GM12878 (cell line): ENCODE measurements at regions of chr10 and their contacts with region 1.

Region 1: GRCh38 chr10:24724381-24725228 is 918 bp upstream of the ARHGAP21 start:
- DNase-seq: peak; percentile 90
- ATAC-seq: peak; percentile 87
- H3K4me3 ChIP-seq: peak overlapping the region; percentile 88
- H3K27ac ChIP-seq: peak overlapping the region; percentile 51
- H3K4me1 ChIP-seq: peaks cover 6% of the 10 kb centered on the region; the same call in 1 of the 2 replicates
- H3K27me3 ChIP-seq: no peaks in the 10 kb centered on the region
- CTCF ChIP-seq: no peak
- EP300 ChIP-seq: no peak
- POLR2A ChIP-seq: peak; percentile 89
- RAD21 ChIP-seq: peak; percentile 4; the same call in 1 of the 2 replicates

Region 2: DNA sequence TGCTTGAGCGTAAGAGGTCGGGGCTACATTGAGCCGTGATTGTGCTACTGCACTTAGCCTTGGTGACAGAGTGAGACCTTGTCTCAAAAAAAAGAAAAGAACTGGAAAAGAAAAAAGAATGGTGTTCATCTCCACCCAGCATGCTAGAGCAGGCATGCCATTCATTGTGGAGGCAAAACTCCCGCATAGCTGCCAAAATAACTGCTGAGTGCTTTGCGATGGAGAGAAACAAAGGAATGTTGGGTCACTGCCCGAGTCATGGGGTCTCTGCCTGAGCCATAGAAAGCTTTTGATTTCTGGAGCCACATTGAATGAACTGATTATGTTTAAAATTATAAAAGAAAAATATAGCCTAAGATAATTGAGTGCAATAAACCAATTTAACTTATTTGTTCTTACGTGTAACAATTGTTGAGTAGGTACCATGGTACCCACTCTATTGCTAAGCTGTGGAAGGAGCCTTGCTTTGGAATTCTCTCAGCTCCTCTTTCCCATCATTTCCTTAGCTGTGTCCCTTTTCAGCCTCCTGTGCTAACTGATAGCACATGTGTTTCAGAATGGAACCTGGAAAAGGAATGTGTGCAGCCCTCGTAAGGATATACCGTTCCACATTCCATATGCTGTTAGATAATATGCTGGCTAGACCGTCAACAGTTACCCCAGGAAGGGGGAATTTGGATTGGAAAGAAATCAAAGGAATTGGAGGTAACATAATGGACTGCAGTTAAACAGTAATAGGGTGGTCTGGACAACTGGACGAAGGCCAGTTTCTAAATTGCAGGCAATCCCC is 416.7 kb before region 1 on chr10:
- CTCF ChIA-PET with region 1: no interaction called
- POLR2A ChIA-PET with region 1: no interaction called
- RAD21 ChIA-PET with region 1: no interaction called
- SMC1A ChIA-PET with region 1: no interaction called
- in situ Hi-C with region 1: no loop called
- intact Hi-C with region 1: no loop called
- DNase-seq: no peak
- ATAC-seq: no peak
- H3K4me3 ChIP-seq: no peak overlapping the region
- H3K27ac ChIP-seq: no peak overlapping the region
- H3K4me1 ChIP-seq: no peaks in the 10 kb centered on the region
- H3K27me3 ChIP-seq: no peaks in the 10 kb centered on the region
- CTCF ChIP-seq: no peak
- EP300 ChIP-seq: no peak
- POLR2A ChIP-seq: no peak
- RAD21 ChIP-seq: no peak

Region 3: GRCh38 chr10:24617771-24618391 is 106.7 kb before region 1 on chr10:
- CTCF ChIA-PET with region 1: interaction called, 17 read pairs
- POLR2A ChIA-PET with region 1: no interaction called
- RAD21 ChIA-PET with region 1: interaction called, 5 read pairs
- SMC1A ChIA-PET with region 1: interaction called, 5 read pairs
- in situ Hi-C with region 1: no loop called
- intact Hi-C with region 1: no loop called
- DNase-seq: no peak
- ATAC-seq: peak; percentile 88
- H3K4me3 ChIP-seq: no peak overlapping the region
- H3K27ac ChIP-seq: no peak overlapping the region
- H3K4me1 ChIP-seq: no peaks in the 10 kb centered on the region
- H3K27me3 ChIP-seq: no peaks in the 10 kb centered on the region
- CTCF ChIP-seq: peak; percentile 73 to 84 (median 80)
- EP300 ChIP-seq: no peak
- POLR2A ChIP-seq: no peak
- RAD21 ChIP-seq: peak; percentile 56

Region 4: GRCh38 chr10:24706479-24707118 is 18.0 kb before region 1 on chr10:
- CTCF ChIA-PET with region 1: interaction called, 13 read pairs
- POLR2A ChIA-PET with region 1: interaction called, 14 read pairs
- RAD21 ChIA-PET with region 1: interaction called, 11 read pairs
- SMC1A ChIA-PET with region 1: interaction called, 22 read pairs
- in situ Hi-C with region 1: no loop called
- intact Hi-C with region 1: loop called (anchors 2 kb)
- DNase-seq: no peak
- ATAC-seq: peak; percentile 81
- H3K4me3 ChIP-seq: no peak overlapping the region
- H3K27ac ChIP-seq: no peak overlapping the region
- H3K4me1 ChIP-seq: peaks cover 9% of the 10 kb centered on the region; the same call in 1 of the 2 replicates
- H3K27me3 ChIP-seq: no peaks in the 10 kb centered on the region
- CTCF ChIP-seq: no peak
- EP300 ChIP-seq: no peak
- POLR2A ChIP-seq: no peak
- RAD21 ChIP-seq: no peak

Region 5: DNA sequence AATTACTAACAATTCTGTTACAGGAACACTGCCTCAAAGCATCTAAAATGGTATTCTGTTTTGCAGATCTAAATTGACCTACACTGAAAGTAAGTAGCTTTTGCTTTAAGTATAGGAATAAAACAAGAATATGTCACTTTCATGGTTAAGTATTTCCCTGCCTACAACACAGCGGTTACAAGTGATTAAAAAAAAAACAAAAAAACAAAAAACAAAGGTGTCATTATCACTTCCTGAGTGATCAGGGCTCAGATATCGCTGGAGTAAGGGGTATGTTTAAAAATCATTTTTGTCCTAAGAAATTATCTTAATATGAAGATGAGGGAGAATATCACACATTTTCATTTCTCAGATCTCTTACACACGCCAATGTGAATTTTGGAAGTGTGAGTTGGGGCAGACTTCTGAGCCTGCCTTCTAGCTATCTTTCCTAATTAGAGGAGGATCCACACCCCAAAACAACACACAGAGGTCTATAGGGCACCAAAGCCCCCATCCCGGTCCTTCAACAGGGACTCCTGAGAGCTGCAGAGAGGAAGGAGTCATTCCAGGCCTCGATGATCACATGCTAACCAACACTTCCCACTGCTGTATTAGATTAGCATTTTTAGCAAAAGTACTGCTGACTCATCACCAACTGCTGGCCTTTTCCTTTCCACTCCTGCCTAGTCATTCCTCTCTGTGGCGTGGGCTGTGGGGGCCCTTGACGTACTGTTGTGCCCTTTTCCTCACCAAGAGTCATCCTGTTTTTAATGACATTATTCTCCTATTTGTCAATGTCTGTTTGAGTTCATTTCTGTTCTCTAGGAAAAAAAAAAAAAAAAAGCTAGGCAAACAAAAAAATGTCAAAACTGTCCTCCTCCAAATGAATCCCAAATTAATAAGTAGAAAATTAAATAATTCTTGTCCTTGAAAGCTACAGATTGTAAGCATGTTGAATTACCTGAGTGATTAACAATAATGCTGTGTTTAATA is 196.6 kb after region 1 on chr10:
- CTCF ChIA-PET with region 1: no interaction called
- POLR2A ChIA-PET with region 1: no interaction called
- RAD21 ChIA-PET with region 1: interaction called, 10 read pairs
- SMC1A ChIA-PET with region 1: interaction called, 6 read pairs
- in situ Hi-C with region 1: no loop called
- intact Hi-C with region 1: loop called (anchors 5 kb)
- DNase-seq: peak; percentile 67
- ATAC-seq: peak; percentile 95
- H3K4me3 ChIP-seq: no peak overlapping the region
- H3K27ac ChIP-seq: peak overlapping the region; percentile 69
- H3K4me1 ChIP-seq: peaks cover 9% of the 10 kb centered on the region
- H3K27me3 ChIP-seq: no peaks in the 10 kb centered on the region
- CTCF ChIP-seq: no peak
- EP300 ChIP-seq: peak; percentile 86 to 91
- POLR2A ChIP-seq: no peak
- RAD21 ChIP-seq: peak; percentile 12; the same call in 1 of the 2 replicates

Region 6: DNA sequence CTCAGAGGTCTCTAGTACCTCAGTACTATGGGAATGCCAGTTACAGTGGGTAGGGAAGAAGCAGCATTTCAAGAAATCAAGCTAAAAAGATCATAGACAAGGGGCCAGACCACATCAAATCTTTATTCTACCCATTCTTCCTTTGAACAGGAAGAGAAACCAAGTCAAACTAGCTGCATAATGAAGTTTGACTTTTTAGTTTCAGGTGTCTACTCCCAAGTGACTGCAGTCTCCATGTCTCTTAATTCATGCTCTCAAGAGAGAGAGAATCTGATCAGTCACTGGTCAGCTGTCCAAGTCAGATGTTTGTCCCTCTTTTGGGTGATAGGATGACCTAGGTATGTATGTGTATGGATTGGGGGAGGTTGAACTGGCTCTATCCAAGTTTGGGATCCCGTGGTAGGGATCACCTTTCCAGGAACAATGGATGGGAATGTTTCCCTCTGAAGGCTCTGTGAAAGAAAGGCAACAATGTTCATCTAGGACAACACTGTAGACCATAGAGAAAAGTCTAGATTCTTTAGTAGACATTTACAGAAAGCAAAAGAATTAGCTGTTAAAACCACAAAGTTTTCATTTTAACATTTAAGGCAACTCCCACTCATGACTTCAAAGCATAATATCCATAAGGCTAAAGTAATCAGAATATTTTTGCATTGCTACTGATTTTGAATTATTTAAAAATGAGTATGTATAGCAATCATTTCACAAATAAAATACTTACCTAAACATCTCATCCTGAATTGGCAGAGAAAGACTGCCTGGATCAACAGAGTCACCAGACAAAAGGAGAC is 257.9 kb after region 1 on chr10:
- CTCF ChIA-PET with region 1: interaction called, 13 read pairs
- POLR2A ChIA-PET with region 1: interaction called, 3 read pairs
- RAD21 ChIA-PET with region 1: interaction called, 6 read pairs
- SMC1A ChIA-PET with region 1: interaction called, 16 read pairs
- in situ Hi-C with region 1: no loop called
- intact Hi-C with region 1: no loop called
- DNase-seq: peak; percentile 42
- ATAC-seq: peak; percentile 31; the same call in 2 of the 3 replicates
- H3K4me3 ChIP-seq: no peak overlapping the region
- H3K27ac ChIP-seq: no peak overlapping the region
- H3K4me1 ChIP-seq: peaks cover 4% of the 10 kb centered on the region
- H3K27me3 ChIP-seq: no peaks in the 10 kb centered on the region
- CTCF ChIP-seq: no peak
- EP300 ChIP-seq: no peak
- POLR2A ChIP-seq: no peak
- RAD21 ChIP-seq: no peak

Region 7: DNA sequence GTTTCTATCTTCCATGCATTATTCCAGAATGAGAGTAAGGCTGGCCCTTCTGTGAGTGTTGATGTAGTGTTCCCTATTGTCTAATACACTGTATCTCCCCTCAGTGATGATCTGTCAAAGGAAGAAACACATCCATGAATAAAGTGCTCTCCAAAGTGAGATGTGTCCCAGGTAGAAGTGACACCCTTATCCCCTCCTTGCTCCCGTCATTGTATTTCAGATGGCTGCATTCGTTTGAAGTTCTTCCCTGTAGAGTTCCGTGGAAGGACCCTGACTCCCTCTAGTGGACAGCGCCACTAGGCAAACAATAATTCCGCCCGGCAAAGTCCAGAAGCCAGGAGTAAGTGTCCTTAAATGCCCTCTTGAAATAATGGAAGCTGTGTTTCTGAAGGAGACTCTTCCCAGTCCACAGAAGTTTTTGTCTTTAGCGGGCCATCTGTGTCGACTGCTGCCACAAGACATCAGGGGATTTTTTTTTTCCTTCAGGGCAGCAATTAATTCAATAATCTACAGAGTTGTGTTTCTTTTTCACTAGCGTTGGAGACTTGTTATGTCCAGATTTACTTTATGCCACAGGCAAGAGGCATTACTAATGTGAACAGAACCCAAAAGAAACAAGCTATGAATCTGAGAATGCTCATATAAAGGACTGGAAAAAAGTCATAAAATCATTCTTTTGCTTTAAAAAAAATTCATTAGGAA is 356.4 kb after region 1 on chr10:
- CTCF ChIA-PET with region 1: interaction called, 51 read pairs
- POLR2A ChIA-PET with region 1: no interaction called
- RAD21 ChIA-PET with region 1: interaction called, 20 read pairs
- SMC1A ChIA-PET with region 1: interaction called, 59 read pairs
- in situ Hi-C with region 1: no loop called
- intact Hi-C with region 1: loop called (anchors 5 kb)
- DNase-seq: peak; percentile 30
- ATAC-seq: peak; percentile 90
- H3K4me3 ChIP-seq: no peak overlapping the region
- H3K27ac ChIP-seq: no peak overlapping the region
- H3K4me1 ChIP-seq: peaks cover 4% of the 10 kb centered on the region; the same call in 1 of the 2 replicates
- H3K27me3 ChIP-seq: no peaks in the 10 kb centered on the region; a peak in 1 of 4 replicates
- CTCF ChIP-seq: peak; percentile 90 to 92 (median 91)
- EP300 ChIP-seq: no peak
- POLR2A ChIP-seq: no peak
- RAD21 ChIP-seq: peak; percentile 96